B cell (primary cell): ENCODE measurements at regions of chr12 and their contacts with region 1.

Region 1: GRCh38 chr12:39372929-39373328 is 70.0 kb downstream of the KIF21A start:
- DNase-seq: no peak
- ATAC-seq: no peak
- H3K4me3 ChIP-seq: no peak overlapping the region
- H3K4me3 Mint-ChIP-seq: no peak overlapping the region
- H3K27ac ChIP-seq: no peak overlapping the region
- H3K27ac Mint-ChIP-seq: no peak overlapping the region
- H3K4me1 ChIP-seq: no peaks in the 10 kb centered on the region
- H3K4me1 Mint-ChIP-seq: peaks cover 5% of the 10 kb centered on the region
- H3K27me3 ChIP-seq: no peaks in the 10 kb centered on the region
- H3K27me3 Mint-ChIP-seq: no peaks in the 10 kb centered on the region
- CTCF ChIP-seq: no peak

Region 2: GRCh38 chr12:39359644-39360043 is 13.3 kb before region 1 on chr12:
- CTCF ChIA-PET with region 1: no interaction called
- POLR2A ChIA-PET with region 1: no interaction called
- intact Hi-C with region 1: loop called (anchors 2 kb)
- DNase-seq: no peak
- ATAC-seq: no peak
- H3K4me3 ChIP-seq: no peak overlapping the region
- H3K4me3 Mint-ChIP-seq: no peak overlapping the region
- H3K27ac ChIP-seq: no peak overlapping the region
- H3K27ac Mint-ChIP-seq: no peak overlapping the region
- H3K4me1 ChIP-seq: no peaks in the 10 kb centered on the region
- H3K4me1 Mint-ChIP-seq: no peaks in the 10 kb centered on the region
- H3K27me3 ChIP-seq: no peaks in the 10 kb centered on the region
- H3K27me3 Mint-ChIP-seq: peaks cover 4% of the 10 kb centered on the region
- CTCF ChIP-seq: no peak

Region 3: GRCh38 chr12:39476118-39476517 is 103.2 kb after region 1 on chr12:
- CTCF ChIA-PET with region 1: no interaction called
- POLR2A ChIA-PET with region 1: no interaction called
- intact Hi-C with region 1: no loop called
- DNase-seq: no peak
- ATAC-seq: no peak
- H3K4me3 ChIP-seq: no peak overlapping the region
- H3K4me3 Mint-ChIP-seq: no peak overlapping the region
- H3K27ac ChIP-seq: no peak overlapping the region
- H3K27ac Mint-ChIP-seq: no peak overlapping the region
- H3K4me1 ChIP-seq: no peaks in the 10 kb centered on the region
- H3K4me1 Mint-ChIP-seq: no peaks in the 10 kb centered on the region
- H3K27me3 ChIP-seq: no peaks in the 10 kb centered on the region
- H3K27me3 Mint-ChIP-seq: peaks cover 20% of the 10 kb centered on the region
- CTCF ChIP-seq: no peak